Posterior vena cava (tissue), 2 donors: ENCODE measurements at regions of chr5 and their contacts with region 1.

Region 1: DNA sequence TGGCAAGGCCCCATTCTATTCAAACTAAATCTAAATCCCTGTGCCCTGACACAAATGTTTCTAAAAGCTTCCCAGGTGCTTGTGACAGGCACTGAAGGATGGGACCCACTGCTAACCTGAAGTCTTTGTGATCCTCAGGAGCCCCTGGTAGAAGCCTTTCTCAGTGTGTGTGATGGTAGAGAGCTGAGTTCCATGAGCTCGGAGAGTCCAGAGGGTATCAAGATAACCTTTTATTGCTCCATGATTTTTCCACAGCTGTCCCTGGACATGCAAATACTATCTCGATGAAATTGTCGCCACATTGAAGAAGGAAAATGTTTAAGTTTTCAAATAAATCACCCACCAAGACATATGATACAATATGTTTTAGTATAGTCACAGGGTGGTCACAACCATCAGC is 7.7 kb downstream of the CAST start:
- DNase-seq: no peak

Region 2: GRCh38 chr5:96651948-96652753 is 17.8 kb before region 1 on chr5:
- intact Hi-C with region 1: no loop called
- DNase-seq: no peak

Region 3: GRCh38 chr5:96680759-96681470 is 11.0 kb after region 1 on chr5:
- intact Hi-C with region 1: loop called in 1 of 2 experiments (anchors 1 kb)
- DNase-seq: no peak